ENCODE measurements at regions of chr21 and their contacts with region 1.

Region 1: DNA sequence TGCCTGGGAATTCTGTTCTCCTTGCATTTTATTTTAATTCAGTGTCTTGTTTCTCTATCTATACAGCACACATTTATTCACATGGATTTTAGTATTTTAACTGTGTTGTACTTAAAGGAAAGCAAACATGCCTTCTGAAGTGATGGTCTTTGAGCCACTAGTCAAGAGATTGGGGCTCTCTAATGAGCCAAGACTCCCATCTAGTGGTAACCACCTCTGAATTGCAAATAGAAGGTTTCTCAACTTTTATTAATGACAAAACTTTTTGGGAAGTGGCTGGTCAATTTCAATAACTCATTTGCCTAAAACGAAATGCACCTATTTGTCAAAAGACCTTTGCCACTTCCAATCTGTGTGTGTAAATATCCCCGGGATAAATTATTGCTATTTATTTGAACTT is 199.6 kb downstream of the LTN1 start:
- DNase-seq: peak in 1 of 2 donors; percentile 31
- ATAC-seq: peak; percentile 63 to 79 (median 69)
- H3K4me3 ChIP-seq: no peak overlapping the region
- H3K4me3 Mint-ChIP-seq: peak overlapping the region; percentile 43
- H3K27ac ChIP-seq: no peak overlapping the region
- H3K27ac Mint-ChIP-seq: peak overlapping the region; percentile 42 to 61
- H3K4me1 ChIP-seq: peaks cover 14% of the 10 kb centered on the region
- H3K4me1 Mint-ChIP-seq: peaks cover 54% of the 10 kb centered on the region in 2 donors
- H3K27me3 ChIP-seq: no peaks in the 10 kb centered on the region
- H3K27me3 Mint-ChIP-seq: no peaks in the 10 kb centered on the region
- CTCF ChIP-seq: peak; percentile 71

Region 2: DNA sequence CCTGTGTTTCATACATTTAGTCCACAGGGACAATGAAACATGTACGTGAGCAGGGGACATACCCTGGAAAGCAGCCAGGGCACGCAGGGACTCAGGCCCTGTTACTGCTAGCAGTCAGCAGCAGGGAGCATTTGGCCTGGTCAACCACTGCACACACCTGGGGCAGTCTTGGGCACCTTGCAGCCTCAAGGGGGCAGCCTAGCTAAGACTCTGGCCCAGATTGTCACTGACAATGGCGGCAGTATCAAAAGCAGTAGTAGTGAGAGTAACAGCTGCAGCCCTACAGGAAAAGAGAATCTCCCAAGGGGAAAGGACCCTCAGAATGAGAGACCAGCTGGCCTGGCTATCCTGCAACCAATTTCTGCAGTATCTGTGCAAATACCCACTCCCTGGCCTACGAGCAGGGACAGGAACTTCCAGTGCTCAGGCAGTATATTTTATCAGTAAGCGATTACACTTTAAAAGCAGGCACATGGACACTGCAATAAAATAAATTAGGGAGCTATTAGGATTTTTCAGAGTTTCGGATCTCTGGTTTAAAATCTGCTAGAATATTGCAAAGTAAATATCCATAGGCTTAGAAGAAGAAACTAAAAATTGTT is 276.0 kb before region 1 on chr21:
- intact Hi-C with region 1: loop called (anchors 2 kb)
- DNase-seq: peak; percentile 39 to 76
- ATAC-seq: peak; percentile 78 to 80 (median 79)
- H3K4me3 ChIP-seq: no peak overlapping the region
- H3K4me3 Mint-ChIP-seq: no peak overlapping the region
- H3K27ac ChIP-seq: no peak overlapping the region
- H3K27ac Mint-ChIP-seq: no peak overlapping the region
- H3K4me1 ChIP-seq: peaks cover 5% of the 10 kb centered on the region
- H3K4me1 Mint-ChIP-seq: peaks cover 13 to 24% of the 10 kb centered on the region in 2 donors
- H3K27me3 ChIP-seq: no peaks in the 10 kb centered on the region
- H3K27me3 Mint-ChIP-seq: no peaks in the 10 kb centered on the region
- CTCF ChIP-seq: peak; percentile 62

Region 3: GRCh38 chr21:28522014-28522799 is 270.8 kb before region 1 on chr21:
- intact Hi-C with region 1: loop called (anchors 2 kb)
- DNase-seq: peak in 1 of 2 donors; percentile 17
- ATAC-seq: peak; percentile 87 to 92 (median 89)
- H3K4me3 ChIP-seq: no peak overlapping the region
- H3K4me3 Mint-ChIP-seq: peak overlapping the region; percentile 17
- H3K27ac ChIP-seq: no peak overlapping the region
- H3K27ac Mint-ChIP-seq: peak overlapping the region in 1 of 2 donors; percentile 49
- H3K4me1 ChIP-seq: peaks cover 12% of the 10 kb centered on the region
- H3K4me1 Mint-ChIP-seq: peaks cover 22 to 27% of the 10 kb centered on the region in 2 donors
- H3K27me3 ChIP-seq: no peaks in the 10 kb centered on the region
- H3K27me3 Mint-ChIP-seq: no peaks in the 10 kb centered on the region
- CTCF ChIP-seq: peak; percentile 39

Region 4: GRCh38 chr21:28639737-28640136 is 153.3 kb before region 1 on chr21:
- intact Hi-C with region 1: no loop called
- DNase-seq: no peak
- ATAC-seq: no peak
- H3K4me3 ChIP-seq: no peak overlapping the region
- H3K4me3 Mint-ChIP-seq: no peak overlapping the region
- H3K27ac ChIP-seq: no peak overlapping the region
- H3K27ac Mint-ChIP-seq: peak overlapping the region in 1 of 2 donors; percentile 19
- H3K4me1 ChIP-seq: no peaks in the 10 kb centered on the region
- H3K4me1 Mint-ChIP-seq: peaks cover 47 to 55% of the 10 kb centered on the region in 2 donors
- H3K27me3 ChIP-seq: no peaks in the 10 kb centered on the region
- H3K27me3 Mint-ChIP-seq: no peaks in the 10 kb centered on the region
- CTCF ChIP-seq: no peak

Region 5: GRCh38 chr21:28737674-28738419 is 55.2 kb before region 1 on chr21:
- intact Hi-C with region 1: no loop called
- DNase-seq: no peak
- ATAC-seq: no peak
- H3K4me3 ChIP-seq: no peak overlapping the region
- H3K4me3 Mint-ChIP-seq: no peak overlapping the region
- H3K27ac ChIP-seq: no peak overlapping the region
- H3K27ac Mint-ChIP-seq: peak overlapping the region; percentile 4 to 70
- H3K4me1 ChIP-seq: no peaks in the 10 kb centered on the region
- H3K4me1 Mint-ChIP-seq: peaks cover 38 to 48% of the 10 kb centered on the region in 2 donors
- H3K27me3 ChIP-seq: no peaks in the 10 kb centered on the region
- H3K27me3 Mint-ChIP-seq: no peaks in the 10 kb centered on the region
- CTCF ChIP-seq: no peak

Region 6: DNA sequence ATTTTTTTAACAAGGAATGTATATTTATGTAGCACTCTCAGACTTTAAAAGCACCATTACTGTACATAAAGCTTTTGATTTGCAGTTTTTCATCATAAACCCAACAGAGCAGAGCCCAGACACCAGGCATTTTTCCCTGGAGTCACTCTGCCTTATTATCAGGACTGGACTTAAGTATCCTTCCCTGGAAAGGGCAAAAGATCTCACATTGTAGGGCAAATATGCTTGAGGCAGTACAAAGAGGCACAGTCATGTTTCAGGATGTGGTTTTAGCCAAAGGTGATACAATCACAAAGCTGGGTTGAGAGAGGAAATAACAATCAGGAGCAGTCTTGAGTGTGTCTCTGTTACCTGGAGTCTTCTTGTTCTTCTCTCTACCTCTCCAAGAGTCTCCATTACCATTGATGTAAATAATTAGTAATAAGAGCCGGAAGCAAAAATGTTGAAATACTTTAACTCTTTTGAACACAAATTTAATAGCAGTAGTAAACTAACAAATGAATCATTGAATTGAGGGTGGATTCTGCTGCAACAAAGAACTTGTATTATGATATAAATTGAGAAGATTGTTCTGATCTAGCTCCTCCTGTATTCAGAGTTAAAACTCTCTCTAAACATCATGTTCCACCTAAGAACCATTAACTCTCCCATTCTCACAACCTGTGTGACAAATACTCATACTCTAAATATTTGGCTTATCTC is 39.1 kb after region 1 on chr21:
- intact Hi-C with region 1: loop called (anchors 2 kb)
- DNase-seq: peak in 1 of 2 donors; percentile 69
- ATAC-seq: peak; percentile 81 to 92 (median 91)
- H3K4me3 ChIP-seq: no peak overlapping the region
- H3K4me3 Mint-ChIP-seq: peak overlapping the region; percentile 80
- H3K27ac ChIP-seq: peak overlapping the region; percentile 57
- H3K27ac Mint-ChIP-seq: peak overlapping the region; percentile 82 to 86
- H3K4me1 ChIP-seq: peaks cover 34% of the 10 kb centered on the region
- H3K4me1 Mint-ChIP-seq: peaks cover 90 to 93% of the 10 kb centered on the region in 2 donors
- H3K27me3 ChIP-seq: no peaks in the 10 kb centered on the region
- H3K27me3 Mint-ChIP-seq: no peaks in the 10 kb centered on the region
- CTCF ChIP-seq: no peak